WTC11 (cell line): ENCODE measurements at regions of chr13 and their contacts with region 1.

Region 1: GRCh38 chr13:38979891-38980749 is 10.5 kb downstream of the STOML3 start:
- DNase-seq: no peak
- ATAC-seq: peak; percentile 69
- H3K4me3 Mint-ChIP-seq: no peak overlapping the region
- H3K27ac Mint-ChIP-seq: no peak overlapping the region
- H3K4me1 Mint-ChIP-seq: peaks cover 16% of the 10 kb centered on the region
- H3K27me3 Mint-ChIP-seq: no peaks in the 10 kb centered on the region; the same call in 1 of the 2 replicates
- CTCF ChIP-seq: no peak

Region 2: GRCh38 chr13:38730332-38730731 is 249.8 kb before region 1 on chr13:
- CTCF ChIA-PET with region 1: no interaction called
- POLR2A ChIA-PET with region 1: no interaction called
- DNase-seq: no peak
- ATAC-seq: no peak
- H3K4me3 Mint-ChIP-seq: no peak overlapping the region
- H3K27ac Mint-ChIP-seq: no peak overlapping the region
- H3K4me1 Mint-ChIP-seq: no peaks in the 10 kb centered on the region
- H3K27me3 Mint-ChIP-seq: no peaks in the 10 kb centered on the region
- CTCF ChIP-seq: no peak

Region 3: DNA sequence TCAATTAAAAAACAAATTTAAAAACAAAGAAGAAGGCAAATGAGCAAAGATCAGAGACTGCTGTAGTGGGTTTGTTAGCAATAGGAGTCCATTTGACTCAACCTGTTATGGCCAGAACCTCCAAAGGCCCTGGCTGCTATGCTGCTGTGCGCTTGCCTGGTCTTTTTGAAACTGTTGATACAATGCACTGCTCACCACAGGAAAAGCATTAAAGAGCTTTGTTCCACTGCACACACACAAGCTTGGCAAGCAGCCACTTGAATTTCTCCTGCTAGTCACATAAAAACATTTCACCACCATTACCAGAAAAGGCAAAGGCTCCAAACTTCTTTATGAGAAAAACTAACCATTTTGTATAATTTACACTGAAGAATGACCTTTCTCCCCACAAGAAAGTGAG is 161.1 kb before region 1 on chr13:
- CTCF ChIA-PET with region 1: no interaction called
- POLR2A ChIA-PET with region 1: no interaction called
- DNase-seq: no peak
- ATAC-seq: no peak
- H3K4me3 Mint-ChIP-seq: no peak overlapping the region
- H3K27ac Mint-ChIP-seq: no peak overlapping the region
- H3K4me1 Mint-ChIP-seq: peaks cover 12% of the 10 kb centered on the region
- H3K27me3 Mint-ChIP-seq: no peaks in the 10 kb centered on the region
- CTCF ChIP-seq: no peak

Region 4: DNA sequence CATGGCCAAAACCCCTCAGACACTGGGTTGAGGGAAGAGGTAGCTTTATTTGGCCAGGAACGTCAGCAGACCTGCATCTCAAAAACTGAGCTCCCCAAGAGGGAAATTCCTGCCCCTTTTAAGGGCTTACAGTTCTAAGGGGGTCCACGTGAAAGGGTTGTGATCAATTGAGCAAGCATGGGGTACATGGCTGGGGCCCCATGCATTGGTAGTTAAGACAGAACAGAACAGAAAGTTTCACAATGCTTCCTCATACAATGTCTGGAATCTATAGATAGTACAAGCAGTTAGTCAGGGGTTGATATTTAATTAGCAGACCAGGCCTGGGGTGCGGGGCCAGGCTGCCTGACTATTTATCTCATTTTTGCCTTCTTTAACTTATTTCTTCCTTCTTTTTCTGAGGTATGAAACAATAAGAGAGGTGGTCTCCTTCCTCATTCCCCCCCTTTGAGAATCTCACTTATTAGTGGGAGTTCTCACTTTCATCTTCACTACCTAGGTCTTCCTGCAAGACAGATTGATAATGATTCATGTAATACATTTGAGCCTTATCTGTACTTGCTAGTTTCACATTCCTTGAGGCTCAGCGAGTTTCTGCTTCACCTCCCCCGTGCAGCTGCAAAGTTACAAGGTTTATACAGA is 1894.1 kb after region 1 on chr13:
- CTCF ChIA-PET with region 1: no interaction called
- POLR2A ChIA-PET with region 1: interaction called, 10 read pairs
- DNase-seq: no peak
- ATAC-seq: no peak
- H3K4me3 Mint-ChIP-seq: no peak overlapping the region
- H3K27ac Mint-ChIP-seq: no peak overlapping the region
- H3K4me1 Mint-ChIP-seq: no peaks in the 10 kb centered on the region
- H3K27me3 Mint-ChIP-seq: peaks cover 3% of the 10 kb centered on the region
- CTCF ChIP-seq: no peak